Colonic mucosa (tissue), 4 donors: ENCODE measurements at regions of chrX and their contacts with region 1.

Region 1: DNA sequence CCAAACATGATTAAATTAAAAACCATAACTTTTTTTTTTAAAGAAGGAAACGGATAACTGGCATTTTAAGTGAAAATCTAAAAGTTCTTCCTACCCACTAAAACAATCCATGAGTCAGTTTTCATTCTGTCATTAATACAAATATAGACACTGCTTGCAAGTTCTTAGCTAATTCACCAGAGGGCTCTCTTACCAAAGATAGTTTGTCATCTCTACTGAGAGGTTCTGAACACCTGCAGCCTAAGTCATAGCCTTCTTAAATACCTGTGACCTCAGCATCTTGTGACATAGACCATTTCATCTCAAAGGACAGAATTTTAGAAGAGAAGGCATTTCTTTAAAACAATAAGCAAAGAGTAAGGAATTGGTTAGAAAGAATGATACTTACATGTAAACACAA is 65.3 kb upstream of the FAM120C start:
- DNase-seq: no peak
- H3K4me3 ChIP-seq: no peak overlapping the region
- H3K27ac ChIP-seq: no peak overlapping the region
- H3K4me1 ChIP-seq: no peaks in the 10 kb centered on the region
- H3K27me3 ChIP-seq: no peaks in the 10 kb centered on the region
- CTCF ChIP-seq: no peak

Region 2: DNA sequence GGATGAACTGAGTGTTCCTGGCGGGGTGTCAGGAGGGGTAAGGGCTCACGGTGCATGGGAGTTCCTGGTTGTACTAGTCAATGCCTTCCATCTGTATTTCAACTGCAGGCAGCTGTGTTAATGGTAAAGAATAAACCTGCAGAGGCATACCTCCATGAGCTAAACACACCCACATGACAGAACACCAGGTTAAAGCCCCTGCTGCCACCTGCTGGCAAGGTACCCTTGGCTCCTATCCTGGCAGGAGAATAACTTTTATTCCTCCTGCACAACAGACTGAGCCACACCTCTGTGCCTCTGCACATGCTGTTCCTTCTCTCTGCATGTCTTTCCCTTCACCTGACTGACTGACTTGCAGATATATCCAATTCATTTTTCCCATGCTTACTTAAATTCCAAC is 538.7 kb after region 1 on chrX:
- intact Hi-C with region 1: loop called (anchors 10 kb)
- DNase-seq: peak; percentile 28
- H3K4me3 ChIP-seq: no peak overlapping the region
- H3K27ac ChIP-seq: no peak overlapping the region
- H3K4me1 ChIP-seq: no peaks in the 10 kb centered on the region
- H3K27me3 ChIP-seq: no peaks in the 10 kb centered on the region
- CTCF ChIP-seq: peak; percentile 17